Gastrocnemius medialis (tissue), 4 donors: ENCODE measurements at regions of chr20 and their contacts with region 1.

Region 1: DNA sequence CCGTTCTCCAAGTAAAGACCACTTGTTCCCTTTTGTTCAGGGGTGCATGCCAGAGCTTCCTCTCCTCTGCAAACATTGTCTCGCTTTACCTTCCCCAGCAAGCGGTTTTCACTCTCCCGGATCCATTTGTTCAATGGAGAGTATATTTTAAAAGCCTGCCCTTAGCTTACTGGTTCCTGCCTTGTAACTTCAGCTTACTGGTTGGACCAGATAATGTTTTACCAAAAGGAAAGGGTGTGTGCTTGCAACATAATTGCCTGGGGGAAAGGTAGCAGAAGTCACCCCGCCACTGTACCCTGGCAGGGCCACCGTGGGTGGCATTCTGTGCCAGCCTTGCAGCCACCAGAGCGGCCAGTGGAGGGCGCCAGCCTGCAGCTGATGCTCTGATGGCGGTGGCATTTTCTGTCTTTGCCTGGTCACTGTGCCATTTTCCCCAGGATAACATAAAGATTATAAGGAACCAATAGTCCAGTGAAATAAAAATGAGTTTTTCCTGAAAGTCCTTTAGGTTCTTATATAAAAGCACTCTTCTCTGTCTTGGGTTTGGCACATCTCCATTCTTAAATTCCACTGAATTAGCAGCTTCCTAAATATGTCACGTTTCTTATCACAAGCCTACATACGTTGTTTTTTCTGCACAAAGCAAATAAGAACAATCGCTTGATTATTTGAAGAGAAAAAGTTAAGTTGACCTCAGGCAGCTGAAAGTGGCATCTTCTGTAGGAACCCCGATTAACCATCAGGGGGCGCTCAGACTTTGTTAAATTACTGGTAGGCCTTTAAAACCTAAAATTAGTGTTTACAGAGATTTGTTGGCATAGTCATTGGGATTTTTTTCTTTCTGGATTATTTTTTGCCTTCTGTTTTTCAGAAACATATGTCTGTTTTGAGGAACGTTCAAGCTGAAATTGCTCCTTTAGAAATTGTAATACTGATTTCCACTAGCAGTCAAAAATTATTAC is 67.4 kb upstream of the XRN2 start:
- DNase-seq: peak; percentile 6 to 25
- ATAC-seq: peak in 1 of 2 donors; percentile 72
- H3K4me3 ChIP-seq: no peak overlapping the region
- H3K27ac ChIP-seq: no peak overlapping the region
- H3K4me1 ChIP-seq: no peaks in the 10 kb centered on the region
- H3K27me3 ChIP-seq: no peaks in the 10 kb centered on the region
- CTCF ChIP-seq: peak; percentile 50 to 75 (median 57)
- POLR2A ChIP-seq: no peak

Region 2: DNA sequence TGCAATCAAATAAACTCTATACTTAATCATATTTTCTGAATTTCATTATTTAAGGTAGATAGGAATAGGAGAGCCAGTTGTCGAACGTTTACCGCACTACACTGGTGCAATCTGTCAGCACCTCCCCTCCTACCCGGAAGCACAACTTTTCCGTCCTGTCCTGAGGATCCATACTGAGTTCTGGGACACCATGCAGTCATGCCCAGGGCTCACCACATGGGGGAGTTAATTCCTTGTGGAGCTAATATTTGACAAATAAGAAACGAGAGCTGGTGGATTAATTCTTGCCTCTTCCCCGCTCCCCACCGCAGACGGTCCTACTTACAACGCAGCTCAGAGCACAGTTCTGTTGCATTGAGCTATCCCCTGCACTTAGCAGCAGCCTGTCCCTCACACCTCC is 415.7 kb before region 1 on chr20:
- in situ Hi-C with region 1: no loop called
- intact Hi-C with region 1: no loop called
- DNase-seq: no peak
- ATAC-seq: no peak
- H3K4me3 ChIP-seq: no peak overlapping the region
- H3K27ac ChIP-seq: no peak overlapping the region
- H3K4me1 ChIP-seq: peaks cover 8 to 14% of the 10 kb centered on the region in 2 donors
- H3K27me3 ChIP-seq: no peaks in the 10 kb centered on the region
- CTCF ChIP-seq: peak in 3 of 5 experiments; percentile 35 to 51 (median 49)
- POLR2A ChIP-seq: no peak

Region 3: GRCh38 chr20:21323640-21324039 is 87.9 kb after region 1 on chr20:
- in situ Hi-C with region 1: loop called in 1 of 4 experiments (anchors 25 kb)
- intact Hi-C with region 1: loop called (anchors 5 kb)
- DNase-seq: no peak
- ATAC-seq: peak in 1 of 2 donors; percentile 75
- H3K4me3 ChIP-seq: no peak overlapping the region
- H3K27ac ChIP-seq: peak overlapping the region in 3 of 4 donors; percentile 2 to 24 (median 21)
- H3K4me1 ChIP-seq: peaks cover 14 to 39% of the 10 kb centered on the region in 2 donors
- H3K27me3 ChIP-seq: no peaks in the 10 kb centered on the region
- CTCF ChIP-seq: no peak
- POLR2A ChIP-seq: no peak

Region 4: DNA sequence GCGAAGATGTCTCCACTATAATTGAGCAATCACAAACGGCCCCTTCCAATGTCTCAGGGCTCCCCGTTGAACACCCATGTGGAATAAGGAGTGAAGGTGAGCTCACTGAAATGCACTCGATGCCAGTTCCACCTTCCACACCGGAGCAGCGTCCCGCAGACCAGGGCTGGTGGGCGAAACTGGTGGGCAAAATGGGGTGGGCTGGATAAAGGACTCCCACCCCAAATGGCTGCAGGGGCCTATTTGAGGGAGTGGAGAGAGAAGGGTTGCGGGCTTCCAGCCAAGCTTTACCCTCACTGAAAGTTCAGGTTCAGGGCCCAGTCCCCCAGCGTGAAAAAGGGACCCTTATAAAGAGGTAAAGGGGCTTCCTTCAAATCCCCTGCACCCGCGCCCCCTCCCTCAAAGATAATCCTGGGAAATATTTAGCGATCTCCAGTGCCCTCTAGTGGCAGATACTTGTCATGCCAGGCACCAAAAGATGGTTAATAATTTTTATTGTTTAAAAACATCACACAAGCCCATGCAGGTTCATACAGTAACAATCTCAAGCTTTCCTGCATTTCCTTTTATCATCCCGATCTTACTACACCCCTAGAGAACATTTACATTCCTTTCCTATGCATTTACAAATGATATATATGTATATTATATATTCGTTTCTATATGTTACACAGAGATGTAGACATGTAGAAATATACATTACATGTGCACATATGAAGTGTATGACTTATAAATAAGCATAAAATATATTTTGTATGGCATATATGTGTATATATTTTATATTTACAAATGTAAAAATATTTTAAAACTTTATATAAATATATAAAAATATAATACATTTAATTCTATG is 336.3 kb after region 1 on chr20:
- in situ Hi-C with region 1: no loop called
- intact Hi-C with region 1: loop called (anchors 2 kb)
- DNase-seq: no peak
- ATAC-seq: no peak
- H3K4me3 ChIP-seq: no peak overlapping the region
- H3K27ac ChIP-seq: no peak overlapping the region
- H3K4me1 ChIP-seq: no peaks in the 10 kb centered on the region
- H3K27me3 ChIP-seq: peaks cover 0 to 2% (median 0%) of the 10 kb centered on the region in 3 donors
- CTCF ChIP-seq: peak; percentile 57 to 83 (median 74)
- POLR2A ChIP-seq: no peak